ENCODE measurements at regions of chr3 and their contacts with region 1.

Region 1: GRCh38 chr3:137105277-137105977 is 147.6 kb downstream of the IL20RB start:
- ATAC-seq: peak; percentile 64 to 81 (median 72)
- H3K4me3 ChIP-seq: no peak overlapping the region
- H3K27ac ChIP-seq: peak overlapping the region; percentile 21 to 27
- H3K4me1 ChIP-seq: peaks cover 24 to 25% of the 10 kb centered on the region in 2 donors

Region 2: GRCh38 chr3:137692803-137693431 is 587.5 kb after region 1 on chr3:
- in situ Hi-C with region 1: loop called in 2 of 9 experiments (anchors 25 kb)
- ATAC-seq: peak in 6 of 8 experiments; percentile 16 to 93 (median 70)
- H3K4me3 ChIP-seq: no peak overlapping the region
- H3K27ac ChIP-seq: no peak overlapping the region
- H3K4me1 ChIP-seq: peaks cover 4 to 19% of the 10 kb centered on the region in 2 donors

Region 3: DNA sequence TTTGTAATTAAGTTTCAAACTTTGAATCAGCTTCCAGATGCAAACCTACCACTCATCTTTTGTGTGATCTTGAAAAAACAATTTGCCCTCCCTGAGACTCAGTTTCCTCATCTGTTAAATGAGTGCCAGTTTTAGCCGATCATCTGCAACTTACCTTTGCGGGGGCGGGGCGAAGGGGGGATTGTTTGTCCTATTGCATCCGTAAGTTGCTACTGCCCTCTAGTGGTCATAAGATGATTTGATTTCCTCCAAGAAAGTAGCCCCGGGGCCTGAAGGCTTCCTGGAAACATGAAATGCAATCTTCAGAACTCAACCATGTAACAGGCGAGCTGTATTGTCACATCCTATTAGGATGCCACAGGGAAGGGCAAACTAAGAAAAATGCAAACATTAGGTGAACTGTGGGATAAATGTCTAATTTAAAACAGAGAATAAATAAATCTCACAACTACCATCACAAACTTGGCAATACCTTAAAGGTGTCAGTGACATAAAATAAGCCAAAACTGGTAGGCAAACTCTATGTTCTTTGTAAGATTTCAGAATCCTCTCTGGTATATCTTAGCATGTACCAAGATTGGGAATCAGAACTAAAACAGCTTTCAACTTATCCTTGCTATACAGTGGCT is 841.0 kb after region 1 on chr3:
- in situ Hi-C with region 1: loop called in 7 of 9 experiments (anchors 25 kb)
- ATAC-seq: peak in 4 of 8 experiments; percentile 27 to 77 (median 70)
- H3K4me3 ChIP-seq: no peak overlapping the region
- H3K27ac ChIP-seq: no peak overlapping the region
- H3K4me1 ChIP-seq: no peaks in the 10 kb centered on the region

Region 4: DNA sequence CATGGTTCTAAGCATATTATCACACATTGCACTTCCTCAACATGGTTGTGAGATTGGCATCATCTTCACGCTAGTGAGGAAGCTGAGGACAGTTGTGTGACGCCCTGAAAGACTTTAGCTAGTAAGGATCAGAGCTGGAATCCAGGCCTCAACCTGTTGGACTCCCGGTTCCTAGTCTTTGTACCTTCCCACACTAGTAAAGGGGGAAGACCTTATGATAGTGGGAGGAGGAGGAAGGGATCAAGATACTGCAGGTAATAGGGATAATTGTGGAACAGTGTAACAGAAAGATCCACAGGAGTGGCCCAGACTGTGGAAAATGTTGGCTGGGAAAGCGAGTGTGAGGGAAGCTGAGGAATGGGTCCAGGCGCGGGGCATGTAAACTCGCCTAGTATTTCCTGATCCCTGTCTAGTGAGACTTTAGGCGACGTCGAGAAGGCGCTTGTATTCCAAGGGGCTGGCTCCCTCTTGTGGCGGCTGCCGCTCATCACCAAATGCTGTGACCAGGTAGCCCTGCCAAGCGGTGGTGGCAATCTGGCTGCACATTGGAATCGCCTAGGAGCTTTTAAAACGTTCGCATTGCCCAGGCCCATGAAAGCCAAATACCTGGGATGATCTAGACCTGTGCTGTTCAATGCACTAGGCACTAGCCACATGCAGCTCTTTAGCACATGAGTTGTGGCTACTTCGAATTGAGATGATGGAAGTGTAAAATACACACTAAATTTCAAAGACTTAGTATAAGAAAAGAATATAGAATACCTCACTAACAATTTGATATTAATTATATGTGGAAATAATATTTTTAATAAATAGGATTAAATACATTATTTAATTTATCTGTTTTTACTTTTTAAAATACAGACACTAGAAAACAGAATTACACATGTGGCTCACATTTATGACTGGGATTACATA is 865.7 kb after region 1 on chr3:
- in situ Hi-C with region 1: loop called in 5 of 9 experiments (anchors 25 kb)
- ATAC-seq: peak; percentile 77 to 100 (median 92)
- H3K4me3 ChIP-seq: no peak overlapping the region
- H3K27ac ChIP-seq: no peak overlapping the region
- H3K4me1 ChIP-seq: no peaks in the 10 kb centered on the region

Measured in motor neuron (in vitro differentiated cells).